PC-9 (cell line): ENCODE measurements at regions of chr1 and their contacts with region 1.

Region 1: DNA sequence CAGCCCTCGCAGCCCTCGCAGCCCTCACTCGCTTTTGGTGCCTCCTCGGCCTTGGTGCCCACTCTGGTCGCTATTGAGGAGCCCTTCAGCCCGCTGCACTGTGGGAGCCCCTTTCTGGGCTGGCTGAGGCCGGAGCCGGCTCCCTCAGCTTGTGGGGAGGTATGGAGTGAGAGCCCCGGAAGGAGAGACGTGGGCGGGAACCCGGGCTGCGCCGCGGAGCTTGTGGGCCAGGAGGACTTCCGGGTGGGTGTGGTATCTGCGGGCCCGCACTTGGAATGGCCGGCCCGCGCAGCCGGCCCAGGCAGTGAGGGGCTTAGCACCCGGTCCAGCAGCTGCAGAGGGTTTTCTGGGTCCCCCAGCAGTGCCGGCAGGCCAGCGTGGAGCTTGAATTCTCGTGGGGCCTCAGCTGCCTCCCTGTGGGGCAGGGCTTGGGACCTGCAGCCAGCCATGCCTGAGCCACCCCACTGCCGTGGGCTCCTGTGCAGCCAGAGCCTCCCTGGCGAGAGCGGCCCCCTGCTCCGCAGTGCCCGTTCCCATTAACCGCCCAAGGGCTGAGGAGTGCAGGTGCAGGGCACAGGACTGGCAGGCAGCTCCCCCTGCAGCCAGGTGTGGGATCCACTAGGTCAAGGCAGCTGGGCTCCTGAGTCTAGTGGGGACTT is 9.9 kb upstream of the CFHR2 start:
- DNase-seq: no peak
- H3K4me3 ChIP-seq: no peak overlapping the region
- H3K27ac ChIP-seq: no peak overlapping the region
- H3K4me1 ChIP-seq: no peaks in the 10 kb centered on the region
- H3K27me3 ChIP-seq: no peaks in the 10 kb centered on the region
- CTCF ChIP-seq: no peak

Region 2: DNA sequence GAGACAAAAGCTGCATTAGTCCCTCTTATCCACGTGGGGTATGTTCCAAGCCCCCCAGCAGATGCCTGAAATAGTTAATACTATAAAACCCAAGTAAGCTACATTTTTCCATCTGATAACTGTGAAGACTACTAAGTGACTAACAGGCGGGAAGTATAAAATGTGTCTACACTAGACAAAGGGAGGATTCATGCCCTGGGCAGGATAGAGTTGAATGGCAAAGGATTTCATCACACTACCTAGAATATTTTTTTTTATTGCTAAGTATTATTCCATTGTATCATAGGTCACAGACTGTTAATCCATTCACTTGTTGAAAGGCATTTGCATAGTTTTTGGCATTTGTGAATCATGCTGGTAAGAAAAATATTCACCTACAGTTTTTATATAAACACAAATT is 72.2 kb before region 1 on chr1:
- CTCF ChIA-PET with region 1: no interaction called
- POLR2A ChIA-PET with region 1: no interaction called
- intact Hi-C with region 1: loop called (anchors 10 kb)
- DNase-seq: no peak
- H3K4me3 ChIP-seq: no peak overlapping the region
- H3K27ac ChIP-seq: no peak overlapping the region
- H3K4me1 ChIP-seq: no peaks in the 10 kb centered on the region
- H3K27me3 ChIP-seq: no peaks in the 10 kb centered on the region
- CTCF ChIP-seq: no peak

Region 3: DNA sequence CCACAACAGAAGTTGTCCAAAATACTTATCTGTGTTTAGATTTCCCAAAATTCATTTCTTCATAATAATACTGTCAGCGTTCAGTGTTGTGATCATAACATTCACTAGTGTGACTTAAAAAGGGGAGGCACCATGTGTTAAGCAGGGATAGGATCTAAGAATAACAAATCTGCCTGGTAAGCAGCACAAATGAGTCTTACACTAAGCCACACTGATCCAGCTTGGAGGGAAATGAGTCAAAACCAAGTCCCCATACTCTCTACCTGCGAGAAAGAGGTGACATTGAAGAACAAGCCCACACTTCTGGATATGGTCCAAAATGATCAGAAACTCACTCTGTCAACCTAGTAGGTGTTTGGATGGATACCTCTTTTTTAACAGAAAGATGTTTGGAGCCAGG is 479.9 kb after region 1 on chr1:
- CTCF ChIA-PET with region 1: no interaction called
- POLR2A ChIA-PET with region 1: no interaction called
- intact Hi-C with region 1: no loop called
- DNase-seq: no peak
- H3K4me3 ChIP-seq: no peak overlapping the region
- H3K27ac ChIP-seq: no peak overlapping the region
- H3K4me1 ChIP-seq: no peaks in the 10 kb centered on the region
- H3K27me3 ChIP-seq: no peaks in the 10 kb centered on the region
- CTCF ChIP-seq: no peak